ENCODE measurements at regions of chr5 and their contacts with region 1.

Region 1: DNA sequence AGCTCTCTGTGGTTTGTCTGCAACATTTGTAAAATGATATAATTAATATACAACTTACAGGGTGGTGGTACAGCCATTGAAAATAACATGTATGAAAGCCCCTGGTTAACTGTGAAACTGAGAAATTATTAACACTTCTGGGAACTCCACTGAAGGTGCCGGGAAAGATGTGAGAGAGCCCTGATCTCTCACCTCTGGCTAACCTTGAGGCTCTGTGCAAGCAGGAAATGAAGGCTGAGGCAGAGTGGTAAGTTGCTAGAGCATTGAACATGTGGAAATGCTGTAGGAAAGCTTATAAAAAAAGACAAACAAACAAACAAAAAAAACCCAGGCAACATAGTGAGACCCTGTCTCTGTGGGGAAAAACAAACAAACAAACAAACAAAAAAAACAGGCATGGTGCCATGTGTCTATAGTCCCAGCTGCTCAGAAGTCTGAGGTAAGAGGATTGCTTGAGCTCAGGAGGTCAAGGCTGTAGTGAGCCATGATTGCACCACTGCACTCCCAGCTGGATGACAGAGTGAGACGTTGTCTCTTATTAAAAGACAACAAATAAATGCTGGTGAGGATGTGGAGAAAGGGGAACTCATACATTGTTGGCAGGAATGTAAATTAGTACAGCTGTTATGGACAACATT is 7.5 kb downstream of the CATSPER3 start:
- H3K4me3 ChIP-seq: no peak overlapping the region
- H3K27ac ChIP-seq: no peak overlapping the region
- H3K4me1 ChIP-seq: no peaks in the 10 kb centered on the region
- CTCF ChIP-seq: no peak

Region 2: GRCh38 chr5:135271533-135272310 is 296.5 kb after region 1 on chr5:
- CTCF ChIA-PET with region 1: interaction called, 14 read pairs
- POLR2A ChIA-PET with region 1: no interaction called
- H3K4me3 ChIP-seq: no peak overlapping the region
- H3K27ac ChIP-seq: no peak overlapping the region
- H3K4me1 ChIP-seq: 0 out of 2 replicates have a peak, but pooled peaks cover 3% of the 10 kb centered on the region
- CTCF ChIP-seq: no peak